ENCODE measurements at regions of chr4 and their contacts with region 1.

Region 1: DNA sequence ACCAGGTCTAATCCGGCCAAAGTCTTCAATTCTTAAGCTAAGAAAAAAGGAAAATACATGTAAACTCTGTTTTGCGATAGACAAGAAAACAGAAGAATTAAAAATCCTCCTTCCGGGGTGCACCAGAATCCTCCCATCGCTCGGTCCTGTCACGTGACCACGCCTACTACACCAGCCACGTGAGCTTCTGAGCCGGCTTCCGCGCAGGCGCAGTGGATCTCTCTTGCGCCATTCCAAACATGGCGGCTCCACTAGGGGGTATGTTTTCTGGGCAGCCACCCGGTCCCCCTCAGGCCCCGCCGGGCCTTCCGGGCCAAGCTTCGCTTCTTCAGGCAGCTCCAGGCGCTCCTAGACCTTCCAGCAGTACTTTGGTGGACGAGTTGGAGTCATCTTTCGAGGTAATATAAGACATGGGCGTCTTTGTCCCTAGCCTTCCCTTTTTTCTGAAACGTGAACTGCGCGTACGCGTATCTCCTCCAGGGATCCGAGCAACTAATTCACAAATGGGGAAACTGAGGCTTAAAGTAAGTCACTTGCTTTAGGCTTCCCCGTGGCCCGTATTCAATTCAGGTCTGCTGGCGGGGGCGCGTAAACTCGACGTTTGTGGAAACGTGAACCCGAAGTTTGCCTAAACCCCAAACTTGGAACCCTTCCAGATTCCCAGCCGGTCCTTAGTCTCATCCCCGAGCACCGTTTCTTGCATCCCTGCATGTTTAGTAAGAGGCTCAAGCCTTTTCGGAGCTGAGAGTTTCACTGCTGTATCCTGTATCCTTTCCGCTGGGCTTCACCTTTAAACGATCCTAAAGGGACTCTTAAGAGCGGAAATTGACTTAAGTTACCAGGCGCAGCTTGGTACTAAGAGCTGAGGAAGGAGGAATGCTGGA is at the start of gene MED28:
- DNase-seq: peak; percentile 87
- H3K4me3 Mint-ChIP-seq: peak within 1 kb of the TSS; percentile 83
- H3K27ac Mint-ChIP-seq: peak within 1 kb of the TSS; percentile 91
- H3K4me1 Mint-ChIP-seq: peaks cover 14% of the 10 kb centered on the region
- H3K27me3 Mint-ChIP-seq: no peaks in the 10 kb centered on the region
- CTCF ChIP-seq: no peak
- total RNA-seq, gene MED28: 27.2 and 33.3 TPM in 2 replicates

Region 2: GRCh38 chr4:17576932-17577665 is 37.6 kb before region 1 on chr4 and contains the start of gene LAP3:
- CTCF ChIA-PET with region 1: no interaction called
- intact Hi-C with region 1: loop called (anchors 5 kb)
- DNase-seq: peak; percentile 95
- H3K4me3 Mint-ChIP-seq: peak within 1 kb of the TSS; percentile 96
- H3K27ac Mint-ChIP-seq: peak within 1 kb of the TSS; percentile 76
- H3K4me1 Mint-ChIP-seq: no peaks in the 10 kb centered on the region
- H3K27me3 Mint-ChIP-seq: no peaks in the 10 kb centered on the region
- CTCF ChIP-seq: no peak
- total RNA-seq, gene LAP3: 70.6 and 123 TPM in 2 replicates

Region 3: GRCh38 chr4:17915439-17915838 is 300.8 kb after region 1 on chr4:
- CTCF ChIA-PET with region 1: no interaction called
- intact Hi-C with region 1: no loop called
- DNase-seq: no peak
- H3K4me3 Mint-ChIP-seq: no peak overlapping the region
- H3K27ac Mint-ChIP-seq: no peak overlapping the region
- H3K4me1 Mint-ChIP-seq: no peaks in the 10 kb centered on the region
- H3K27me3 Mint-ChIP-seq: no peaks in the 10 kb centered on the region
- CTCF ChIP-seq: no peak

Measured in Calu3 (cell line).